GM12878 (cell line): ENCODE measurements at regions of chr3 and their contacts with region 1.

Region 1: DNA sequence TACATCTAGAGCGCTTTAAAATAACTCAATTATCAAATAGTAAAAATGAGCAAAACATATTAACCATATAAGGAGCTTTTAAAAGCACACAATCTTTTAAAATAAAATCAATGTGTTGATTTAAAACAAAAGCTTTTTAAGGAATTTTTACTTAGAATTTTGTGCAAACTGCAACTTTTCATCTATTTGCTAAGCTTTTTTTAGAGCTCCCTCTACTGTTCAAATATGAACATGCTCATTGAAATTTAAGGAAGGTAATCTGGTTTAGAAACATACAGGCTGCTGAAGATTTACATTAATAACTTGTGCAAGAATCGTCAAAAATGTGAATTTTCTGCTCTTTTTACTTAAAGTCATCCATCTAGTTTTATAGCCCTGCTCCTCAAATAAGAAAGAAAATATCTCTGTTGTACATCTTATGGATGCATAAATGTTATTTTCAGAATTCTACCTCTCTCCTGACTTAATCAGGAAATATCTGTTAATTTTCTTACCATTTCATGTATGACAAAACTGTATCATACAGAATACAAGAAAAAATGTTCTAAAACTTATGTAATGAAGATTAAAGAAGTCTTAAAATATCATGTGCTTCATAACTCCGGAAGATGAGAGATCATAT is 469.4 kb upstream of the ROBO2 start:
- DNase-seq: no peak
- ATAC-seq: no peak
- H3K4me3 ChIP-seq: no peak overlapping the region
- H3K27ac ChIP-seq: no peak overlapping the region
- H3K4me1 ChIP-seq: no peaks in the 10 kb centered on the region
- H3K27me3 ChIP-seq: no peaks in the 10 kb centered on the region
- CTCF ChIP-seq: peak; percentile 41 to 50 (median 48); a peak in 4 of 6 replicates
- EP300 ChIP-seq: no peak
- POLR2A ChIP-seq: no peak
- RAD21 ChIP-seq: peak; percentile 72

Region 2: DNA sequence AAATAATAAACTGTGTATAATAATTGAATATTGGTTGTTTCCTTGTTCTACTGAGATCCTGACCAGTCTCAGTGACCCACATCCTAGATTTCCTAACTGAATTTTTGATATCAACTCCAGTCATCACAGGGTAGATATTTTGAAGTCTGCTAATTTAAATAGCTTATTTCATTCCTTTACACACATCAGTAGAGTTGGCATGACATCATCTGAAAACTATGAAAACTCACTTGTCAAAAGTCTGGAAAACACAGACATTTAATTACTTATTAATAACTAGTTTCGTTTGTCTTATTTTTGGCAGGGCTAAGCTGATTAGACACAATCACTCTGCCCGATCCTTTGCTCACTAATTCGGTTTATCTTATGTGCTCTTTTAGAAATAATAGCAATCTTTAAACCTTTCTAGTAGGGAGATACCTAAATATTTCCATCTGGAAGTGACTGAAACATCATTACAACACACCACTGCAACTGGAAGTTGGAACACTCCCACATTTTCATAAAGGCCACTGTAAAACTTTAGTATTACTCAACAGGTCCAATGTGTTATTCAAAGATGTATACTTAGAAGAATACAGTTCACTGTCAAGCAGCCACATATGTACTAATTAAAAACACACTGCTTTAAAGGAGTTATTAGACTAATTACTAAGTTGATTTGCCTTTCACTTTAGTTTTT is 586.8 kb before region 1 on chr3:
- CTCF ChIA-PET with region 1: no interaction called
- POLR2A ChIA-PET with region 1: no interaction called
- RAD21 ChIA-PET with region 1: no interaction called
- SMC1A ChIA-PET with region 1: no interaction called
- in situ Hi-C with region 1: no loop called
- intact Hi-C with region 1: no loop called
- DNase-seq: no peak
- ATAC-seq: no peak
- H3K4me3 ChIP-seq: no peak overlapping the region
- H3K27ac ChIP-seq: no peak overlapping the region
- H3K4me1 ChIP-seq: no peaks in the 10 kb centered on the region
- H3K27me3 ChIP-seq: no peaks in the 10 kb centered on the region
- CTCF ChIP-seq: no peak
- EP300 ChIP-seq: no peak
- POLR2A ChIP-seq: no peak
- RAD21 ChIP-seq: no peak

Region 3: GRCh38 chr3:76369178-76369577 is 201.4 kb before region 1 on chr3:
- CTCF ChIA-PET with region 1: interaction called, 29 read pairs
- POLR2A ChIA-PET with region 1: no interaction called
- RAD21 ChIA-PET with region 1: interaction called, 11 read pairs
- SMC1A ChIA-PET with region 1: interaction called, 10 read pairs
- in situ Hi-C with region 1: no loop called
- intact Hi-C with region 1: loop called (anchors 5 kb)
- DNase-seq: no peak
- ATAC-seq: peak; percentile 66
- H3K4me3 ChIP-seq: no peak overlapping the region
- H3K27ac ChIP-seq: no peak overlapping the region
- H3K4me1 ChIP-seq: no peaks in the 10 kb centered on the region
- H3K27me3 ChIP-seq: no peaks in the 10 kb centered on the region
- CTCF ChIP-seq: peak; percentile 15 to 31 (median 15); a peak in 3 of 6 replicates
- EP300 ChIP-seq: no peak
- POLR2A ChIP-seq: no peak
- RAD21 ChIP-seq: peak; percentile 80

Region 4: GRCh38 chr3:76585794-76586392 is 15.3 kb after region 1 on chr3:
- CTCF ChIA-PET with region 1: interaction called, 12 read pairs
- POLR2A ChIA-PET with region 1: no interaction called
- RAD21 ChIA-PET with region 1: interaction called, 4 read pairs
- SMC1A ChIA-PET with region 1: interaction called, 4 read pairs
- in situ Hi-C with region 1: no loop called
- intact Hi-C with region 1: no loop called
- DNase-seq: no peak
- ATAC-seq: peak; percentile 59
- H3K4me3 ChIP-seq: no peak overlapping the region
- H3K27ac ChIP-seq: no peak overlapping the region
- H3K4me1 ChIP-seq: no peaks in the 10 kb centered on the region
- H3K27me3 ChIP-seq: no peaks in the 10 kb centered on the region
- CTCF ChIP-seq: peak; percentile 39 to 41 (median 40); a peak in 3 of 6 replicates
- EP300 ChIP-seq: no peak
- POLR2A ChIP-seq: no peak
- RAD21 ChIP-seq: peak; percentile 51